Left ventricle myocardium superior (tissue), 1 donor: ENCODE measurements at regions of chrX and their contacts with region 1.

Region 1: DNA sequence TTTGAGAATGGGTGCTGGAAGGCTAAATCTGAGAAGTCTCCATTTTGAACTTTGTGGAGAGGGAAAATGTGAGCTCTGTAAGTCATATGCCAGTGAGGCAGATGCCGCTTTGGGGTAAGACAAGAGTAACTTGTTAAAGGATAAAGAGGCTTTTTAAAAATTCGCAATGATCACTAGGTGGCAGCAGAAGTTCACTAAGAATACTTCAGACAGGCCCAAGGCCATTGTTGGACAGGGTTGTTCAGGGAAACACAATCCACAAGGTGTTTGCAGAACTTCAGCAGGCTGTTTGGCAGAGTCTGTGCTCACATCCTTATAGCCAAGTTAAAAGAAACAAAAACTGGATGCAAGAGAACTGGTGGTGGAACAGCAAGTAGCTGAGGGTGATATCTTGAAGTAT is 13.7 kb upstream of the PIGA start:
- DNase-seq: no peak
- ATAC-seq: peak; percentile 92

Region 2: GRCh38 chrX:15384304-15384703 is 35.3 kb after region 1 on chrX and contains the start of gene VEGFD:
- intact Hi-C with region 1: no loop called
- DNase-seq: no peak
- ATAC-seq: peak; percentile 66
- total RNA-seq, gene VEGFD: 12.4 TPM

Region 3: DNA sequence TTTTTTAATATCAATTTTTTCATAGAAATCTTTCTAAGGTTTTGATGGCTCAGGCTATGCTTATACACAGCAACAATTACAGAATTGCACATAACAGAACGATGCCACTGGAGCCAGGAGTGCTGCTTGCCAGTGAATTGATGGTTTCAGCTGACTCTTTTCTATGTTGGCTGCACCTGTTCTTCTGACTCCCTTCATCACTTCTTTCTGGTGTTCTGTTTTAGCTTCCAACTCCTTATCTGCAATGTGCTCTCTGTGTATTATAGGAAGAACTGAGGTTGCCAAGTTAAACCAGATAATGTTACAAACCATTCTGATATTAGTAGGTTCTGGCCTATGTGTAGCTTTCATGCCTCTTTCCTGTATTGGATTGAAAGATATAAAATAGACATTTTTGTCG is 46.7 kb after region 1 on chrX:
- intact Hi-C with region 1: no loop called
- DNase-seq: no peak
- ATAC-seq: peak; percentile 88

Region 4: GRCh38 chrX:15468036-15468435 is 119.0 kb after region 1 on chrX:
- intact Hi-C with region 1: loop called (anchors 5 kb)
- DNase-seq: no peak
- ATAC-seq: peak; percentile 71

Region 5: GRCh38 chrX:15524417-15524816 is 175.4 kb after region 1 on chrX:
- intact Hi-C with region 1: no loop called
- DNase-seq: no peak
- ATAC-seq: no peak

Region 6: DNA sequence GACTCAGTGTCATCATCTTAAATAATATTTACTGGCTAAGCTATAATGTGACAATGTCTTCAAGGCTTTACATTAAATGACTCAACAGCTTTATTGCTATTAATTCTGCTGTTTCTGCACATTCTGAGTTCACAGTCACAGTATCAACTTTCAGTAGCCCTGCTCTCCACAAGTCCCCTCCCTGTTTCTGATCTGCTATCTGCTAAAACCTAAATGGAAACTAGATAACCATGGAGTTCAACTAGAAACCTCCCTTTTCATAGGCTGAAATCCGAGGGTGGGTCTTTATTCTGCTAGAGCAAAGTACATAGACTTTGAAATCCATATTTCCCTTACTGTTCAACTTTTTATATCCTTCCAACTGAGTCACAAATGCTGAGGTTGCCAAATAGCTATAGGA is 257.1 kb after region 1 on chrX:
- intact Hi-C with region 1: no loop called
- DNase-seq: no peak
- ATAC-seq: no peak